ENCODE measurements at regions of chr1 and their contacts with region 1.

Region 1: GRCh38 chr1:224615861-224616755 is at the start of gene CNIH3:
- DNase-seq: peak; percentile 60
- H3K4me3 ChIP-seq: peak within 1 kb of the TSS; percentile 48 to 76 (median 60)
- H3K27ac ChIP-seq: no peak within 1 kb of the TSS
- H3K4me1 ChIP-seq: peaks cover 23% of the 10 kb centered on the region
- H3K27me3 ChIP-seq: no peaks in the 10 kb centered on the region
- CTCF ChIP-seq: no peak
- total RNA-seq, gene CNIH3: 0.83 to 3.4 TPM

Region 2: DNA sequence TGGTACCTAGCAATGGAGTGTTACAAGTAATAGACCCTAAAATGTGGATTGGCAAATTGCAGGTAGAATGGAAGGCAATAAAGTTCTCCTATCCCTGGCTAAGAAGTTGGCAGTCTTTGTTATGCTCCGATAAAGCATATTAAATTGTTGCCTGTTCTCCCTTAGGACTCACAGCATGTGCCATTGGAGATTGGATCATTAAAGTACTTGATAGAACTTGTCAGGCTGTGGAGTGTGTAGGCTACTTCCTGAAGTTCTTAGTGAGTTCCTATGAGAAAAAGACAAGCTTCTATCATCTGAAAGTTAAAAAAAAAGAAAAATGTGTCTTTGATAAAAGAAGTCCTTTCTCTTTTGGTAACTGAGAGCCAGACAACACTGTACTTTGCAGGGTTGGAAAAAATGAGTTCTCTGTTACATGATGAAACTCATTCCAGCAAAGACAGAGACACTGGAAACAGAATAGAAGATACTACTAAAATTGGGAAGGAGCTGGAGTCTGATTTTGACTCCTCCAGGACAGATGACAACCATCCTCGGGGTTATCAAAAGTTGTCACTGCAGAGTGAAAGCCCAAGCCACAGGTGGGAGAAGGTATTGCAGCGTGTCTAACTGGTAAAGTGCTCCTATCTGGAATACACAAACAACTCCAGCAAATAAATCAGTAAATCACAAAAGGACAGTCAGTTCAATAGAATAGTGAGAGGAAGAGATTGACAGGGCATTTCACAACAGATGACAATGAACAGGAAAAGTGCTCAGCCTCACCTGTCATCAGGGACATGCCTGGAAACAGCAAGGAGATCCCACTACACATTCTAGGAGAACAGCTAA is 94.0 kb before region 1 on chr1:
- CTCF ChIA-PET with region 1: no interaction called
- dilution Hi-C with region 1: no loop called
- in situ Hi-C with region 1: loop called in 1 of 2 experiments (anchors 10 kb)
- intact Hi-C with region 1: loop called (anchors 5 kb)
- DNase-seq: no peak
- H3K4me3 ChIP-seq: no peak overlapping the region
- H3K27ac ChIP-seq: no peak overlapping the region
- H3K4me1 ChIP-seq: peaks cover 37% of the 10 kb centered on the region
- H3K27me3 ChIP-seq: no peaks in the 10 kb centered on the region
- CTCF ChIP-seq: peak; percentile 33 to 35

Region 3: DNA sequence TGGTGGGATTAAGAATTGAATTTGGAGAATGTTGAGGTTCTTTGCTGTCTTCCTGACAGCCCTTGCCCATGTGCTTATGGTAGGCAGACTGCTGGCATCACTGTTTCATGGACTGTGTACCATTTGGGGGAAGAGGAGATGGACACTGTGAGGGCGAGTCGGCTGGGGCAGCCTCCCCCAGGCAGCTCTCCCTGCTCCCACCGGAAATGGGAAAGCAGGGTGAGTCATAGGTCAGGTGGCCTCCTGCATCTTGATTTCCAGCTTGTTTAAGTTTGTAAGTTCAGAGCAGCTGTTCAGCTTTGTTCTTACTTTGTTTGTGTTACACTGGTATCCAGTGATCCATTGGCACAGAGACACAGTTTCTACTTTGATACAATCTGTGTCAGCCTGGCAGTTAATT is 87.2 kb before region 1 on chr1:
- CTCF ChIA-PET with region 1: no interaction called
- dilution Hi-C with region 1: no loop called
- in situ Hi-C with region 1: loop called in 1 of 2 experiments (anchors 10 kb)
- intact Hi-C with region 1: loop called (anchors 5 kb)
- DNase-seq: no peak
- H3K4me3 ChIP-seq: no peak overlapping the region
- H3K27ac ChIP-seq: no peak overlapping the region
- H3K4me1 ChIP-seq: peaks cover 31% of the 10 kb centered on the region
- H3K27me3 ChIP-seq: no peaks in the 10 kb centered on the region
- CTCF ChIP-seq: no peak

Measured in mammary epithelial cell (primary cell).